Ascending aorta (tissue), 2 donors: ENCODE measurements at regions of chr11 and their contacts with region 1.

Region 1: DNA sequence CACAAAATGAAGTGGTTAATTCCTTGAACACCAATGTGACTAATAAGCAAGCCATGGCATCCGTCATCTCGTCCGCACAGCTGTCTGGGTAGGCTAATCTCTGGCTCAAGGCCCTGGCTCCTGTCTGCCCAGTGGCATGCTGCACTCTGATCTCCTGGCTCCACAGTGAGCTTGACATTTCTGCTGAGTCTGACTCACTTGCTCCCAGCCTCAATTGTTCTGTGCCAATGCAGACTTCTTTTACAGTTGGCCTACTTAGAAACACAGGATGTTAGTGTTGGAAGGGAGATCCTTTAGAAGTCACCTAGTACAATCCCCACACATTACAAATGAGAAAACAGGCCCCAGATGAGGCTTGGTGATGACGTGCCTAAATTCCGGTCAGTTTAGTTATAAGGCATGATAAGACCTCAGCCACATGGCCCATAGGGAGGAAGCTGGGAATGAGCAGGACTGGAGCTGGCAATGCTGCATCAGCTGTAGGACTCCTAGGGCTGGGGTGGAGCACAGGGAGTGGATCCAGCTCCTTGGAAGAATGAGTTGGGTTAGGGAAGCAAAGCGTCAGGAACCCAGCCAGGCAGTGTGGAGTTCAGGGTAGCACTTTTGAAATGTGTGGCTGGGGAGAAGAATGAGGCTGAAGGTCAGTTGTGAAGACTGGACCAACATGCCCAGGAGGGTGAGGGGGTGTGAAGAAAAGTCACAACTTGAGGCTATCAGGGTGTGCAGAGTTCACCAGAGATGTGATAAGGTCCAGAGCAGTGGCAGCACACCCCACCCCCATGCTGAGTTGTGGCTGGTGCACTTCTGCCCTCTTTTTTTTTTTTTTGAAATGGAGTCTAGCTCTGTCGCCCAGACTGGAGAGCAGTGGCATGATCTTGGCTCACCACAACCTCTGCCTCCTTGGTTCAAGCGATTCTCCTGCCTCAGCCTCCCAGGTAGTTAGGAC is 70.2 kb upstream of the EED start:
- DNase-seq: peak; percentile 73 to 97
- H3K4me3 ChIP-seq: no peak overlapping the region
- H3K27ac ChIP-seq: peak overlapping the region; percentile 72 to 88
- H3K4me1 ChIP-seq: peaks cover 9 to 16% of the 10 kb centered on the region in 2 donors
- H3K27me3 ChIP-seq: no peaks in the 10 kb centered on the region
- CTCF ChIP-seq: no peak

Region 2: DNA sequence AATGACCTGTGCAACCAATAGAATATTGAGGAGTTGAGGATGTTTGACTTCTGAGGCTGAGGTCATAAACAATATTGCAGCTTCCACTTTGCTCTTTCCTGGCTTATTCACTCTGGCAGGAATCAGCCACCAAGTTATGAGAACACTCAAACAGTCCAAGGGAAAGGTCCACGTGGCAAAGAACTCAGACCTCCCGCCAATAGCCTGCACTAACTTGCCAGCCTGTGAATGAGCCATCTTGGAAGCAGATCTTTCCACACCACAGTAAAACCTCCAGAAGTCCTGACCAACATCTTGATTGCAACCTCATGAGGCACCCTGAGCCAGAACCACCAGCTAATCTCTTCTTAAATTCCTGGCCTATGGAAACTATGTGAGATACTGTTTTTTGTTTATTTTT is 82.8 kb before region 1 on chr11:
- intact Hi-C with region 1: loop called (anchors 1 kb)
- DNase-seq: peak; percentile 14 to 87
- H3K4me3 ChIP-seq: no peak overlapping the region
- H3K27ac ChIP-seq: peak overlapping the region; percentile 76 to 77
- H3K4me1 ChIP-seq: peaks cover 0 to 12% of the 10 kb centered on the region in 2 donors
- H3K27me3 ChIP-seq: no peaks in the 10 kb centered on the region
- CTCF ChIP-seq: no peak

Region 3: DNA sequence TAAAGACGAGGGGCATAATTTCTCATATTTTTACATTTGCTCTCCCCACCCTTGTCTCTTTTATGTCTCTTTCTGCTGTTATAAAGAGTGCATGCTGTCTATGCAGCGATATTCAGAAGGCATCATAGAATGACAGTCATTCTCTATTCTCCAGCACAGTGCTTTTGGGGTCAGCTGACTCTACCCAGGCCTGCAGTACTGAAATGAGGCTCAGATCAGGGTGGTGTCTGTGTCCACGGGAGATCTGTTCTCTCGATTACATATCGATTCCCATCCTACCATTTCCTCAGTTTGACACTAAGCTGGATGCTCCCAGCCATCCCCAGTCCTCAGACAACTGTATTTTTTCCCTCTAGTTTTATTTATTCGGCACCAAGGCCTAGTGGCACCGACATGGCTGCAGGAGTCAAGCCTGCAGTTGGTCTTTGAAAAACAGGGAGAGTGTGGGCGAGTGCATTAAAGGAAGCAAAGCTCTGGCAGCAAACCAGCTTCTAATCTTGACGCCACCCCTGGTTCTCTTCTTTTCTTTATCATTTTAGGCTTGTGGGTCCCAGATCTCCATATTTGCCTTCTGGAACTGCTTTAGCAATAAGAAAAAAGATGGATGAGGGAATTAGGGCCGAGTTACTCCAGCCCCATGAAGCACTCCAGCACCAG is 33.9 kb before region 1 on chr11:
- intact Hi-C with region 1: no loop called
- DNase-seq: no peak
- H3K4me3 ChIP-seq: no peak overlapping the region
- H3K27ac ChIP-seq: no peak overlapping the region
- H3K4me1 ChIP-seq: no peaks in the 10 kb centered on the region
- H3K27me3 ChIP-seq: no peaks in the 10 kb centered on the region
- CTCF ChIP-seq: no peak

Region 4: GRCh38 chr11:86151174-86152005 is 23.0 kb before region 1 on chr11:
- intact Hi-C with region 1: loop called (anchors 1 kb)
- DNase-seq: peak; percentile 22 to 86
- H3K4me3 ChIP-seq: peak overlapping the region in 1 of 2 donors; percentile 18
- H3K27ac ChIP-seq: peak overlapping the region; percentile 71 to 82
- H3K4me1 ChIP-seq: peaks cover 7 to 30% of the 10 kb centered on the region in 2 donors
- H3K27me3 ChIP-seq: no peaks in the 10 kb centered on the region
- CTCF ChIP-seq: no peak

Region 5: DNA sequence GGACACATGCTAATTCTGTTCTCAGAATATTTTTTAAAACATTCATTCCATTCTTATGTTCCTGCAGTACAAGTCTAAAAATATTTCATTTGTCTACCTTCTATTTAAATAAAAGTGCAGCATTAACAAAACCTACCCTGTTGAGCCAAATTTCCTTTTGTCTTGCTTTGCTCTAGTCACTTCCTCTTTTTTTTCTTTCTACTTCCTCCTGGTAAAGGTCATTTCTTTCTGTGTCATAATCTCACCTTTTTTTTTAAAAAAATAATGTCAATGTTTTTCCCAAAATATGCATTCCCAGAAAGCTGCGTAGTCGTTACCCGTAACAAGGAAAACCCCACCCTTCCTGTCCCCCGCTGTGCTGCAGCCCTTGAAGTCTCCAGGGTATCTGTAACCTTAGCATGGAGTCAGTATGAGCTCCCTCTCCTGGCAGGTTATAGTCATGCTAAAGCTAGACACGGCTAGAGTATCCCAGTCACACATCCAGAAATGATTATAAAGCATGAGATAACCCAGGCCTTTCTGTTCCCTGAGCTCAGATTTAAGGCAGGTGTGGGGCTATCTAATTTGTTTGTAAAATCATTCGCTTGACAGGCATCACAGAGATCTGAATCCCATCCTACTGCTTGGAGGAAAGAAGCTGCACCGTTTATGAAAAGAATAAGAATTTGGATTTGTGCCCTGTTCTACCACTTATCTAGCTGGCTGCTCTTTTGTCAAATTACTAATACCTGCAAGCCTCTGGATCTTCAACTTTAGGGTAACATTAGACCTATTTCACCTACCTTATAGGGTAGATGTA is 19.1 kb after region 1 on chr11:
- intact Hi-C with region 1: loop called (anchors 1 kb)
- DNase-seq: peak; percentile 19 to 86
- H3K4me3 ChIP-seq: peak overlapping the region; percentile 0 to 27
- H3K27ac ChIP-seq: peak overlapping the region; percentile 35 to 49
- H3K4me1 ChIP-seq: peaks cover 4% of the 10 kb centered on the region in 2 donors
- H3K27me3 ChIP-seq: no peaks in the 10 kb centered on the region
- CTCF ChIP-seq: peak; percentile 68 to 72 (median 70)

Region 6: DNA sequence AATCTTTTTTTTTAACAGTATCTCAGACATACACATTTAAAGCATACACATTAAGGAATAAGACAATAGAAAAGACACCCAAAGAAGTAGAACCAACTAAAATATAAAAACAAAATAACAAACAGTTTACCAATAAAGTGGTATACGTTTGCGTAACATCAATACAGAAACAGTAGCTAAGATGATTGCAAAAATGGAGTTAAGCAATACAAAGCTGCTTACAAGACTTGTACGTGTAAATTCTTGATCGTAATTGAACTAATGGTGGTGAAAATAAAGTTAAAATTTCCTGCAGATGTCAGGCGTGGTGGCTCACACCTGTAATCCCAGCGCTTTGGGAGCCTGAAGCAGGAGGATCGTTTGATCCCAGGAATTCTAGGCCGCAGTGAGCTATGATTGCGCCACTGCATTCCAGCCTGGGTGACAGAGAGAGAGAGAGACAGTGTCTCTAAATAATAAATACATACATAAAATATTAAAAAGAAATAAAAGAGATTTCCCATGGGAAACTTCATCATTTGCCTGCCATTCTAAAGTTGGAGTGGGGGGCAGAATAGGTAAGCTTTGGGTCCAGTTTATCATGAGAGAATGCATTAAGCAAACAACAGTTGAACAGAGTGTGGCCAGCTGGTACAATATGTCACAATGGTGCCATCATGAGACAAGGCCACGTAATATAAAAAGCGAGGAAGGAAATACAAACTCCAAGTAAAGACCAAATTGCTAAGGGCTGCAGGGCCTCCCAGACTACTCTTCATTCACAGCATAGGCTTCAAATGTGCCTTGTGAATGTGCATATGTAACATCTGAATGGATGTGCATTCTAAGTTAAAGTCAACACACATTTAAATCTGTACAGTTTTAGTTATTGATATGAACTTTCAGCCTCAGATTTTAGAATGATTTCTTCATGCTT is 31.3 kb after region 1 on chr11:
- intact Hi-C with region 1: no loop called
- DNase-seq: no peak
- H3K4me3 ChIP-seq: no peak overlapping the region
- H3K27ac ChIP-seq: no peak overlapping the region
- H3K4me1 ChIP-seq: no peaks in the 10 kb centered on the region
- H3K27me3 ChIP-seq: no peaks in the 10 kb centered on the region
- CTCF ChIP-seq: no peak